CD4-positive, alpha-beta T cell (primary cell): ENCODE measurements at regions of chr11 and their contacts with region 1.

Region 1: DNA sequence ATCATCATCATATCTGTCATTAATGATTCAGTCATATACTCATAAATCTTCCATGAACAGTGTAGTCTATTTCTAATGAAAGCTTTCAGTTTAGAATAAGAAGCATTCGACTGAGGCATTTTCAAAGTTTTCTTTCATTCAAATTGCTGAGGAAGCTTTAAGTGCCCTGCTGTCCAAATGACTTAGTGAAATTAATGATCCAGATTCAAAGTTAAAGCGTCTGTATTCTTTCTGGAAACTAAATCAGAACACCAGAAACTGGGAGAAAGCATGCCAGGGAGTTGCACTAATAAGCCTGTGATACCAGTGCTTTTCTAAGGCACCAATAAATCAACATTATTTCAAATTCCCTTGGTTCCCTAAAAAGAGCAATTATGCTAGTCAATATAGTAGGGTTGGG is 367.8 kb upstream of the ANO5 start:
- DNase-seq: no peak
- ATAC-seq: no peak
- H3K4me3 ChIP-seq: no peak overlapping the region
- H3K4me3 Mint-ChIP-seq: no peak overlapping the region
- H3K27ac ChIP-seq: no peak overlapping the region
- H3K27ac Mint-ChIP-seq: no peak overlapping the region
- H3K4me1 ChIP-seq: no peaks in the 10 kb centered on the region
- H3K4me1 Mint-ChIP-seq: no peaks in the 10 kb centered on the region
- H3K27me3 ChIP-seq: no peaks in the 10 kb centered on the region
- H3K27me3 Mint-ChIP-seq: no peaks in the 10 kb centered on the region
- CTCF ChIP-seq: no peak

Region 2: GRCh38 chr11:21798216-21798615 is 26.9 kb before region 1 on chr11:
- CTCF ChIA-PET with region 1: no interaction called
- POLR2A ChIA-PET with region 1: no interaction called
- intact Hi-C with region 1: no loop called
- DNase-seq: no peak
- ATAC-seq: no peak
- H3K4me3 ChIP-seq: no peak overlapping the region
- H3K4me3 Mint-ChIP-seq: no peak overlapping the region
- H3K27ac ChIP-seq: no peak overlapping the region
- H3K27ac Mint-ChIP-seq: no peak overlapping the region
- H3K4me1 ChIP-seq: no peaks in the 10 kb centered on the region
- H3K4me1 Mint-ChIP-seq: no peaks in the 10 kb centered on the region
- H3K27me3 ChIP-seq: no peaks in the 10 kb centered on the region
- H3K27me3 Mint-ChIP-seq: no peaks in the 10 kb centered on the region
- CTCF ChIP-seq: no peak

Region 3: GRCh38 chr11:21811572-21811971 is 13.6 kb before region 1 on chr11:
- CTCF ChIA-PET with region 1: no interaction called
- POLR2A ChIA-PET with region 1: no interaction called
- intact Hi-C with region 1: no loop called
- DNase-seq: no peak
- ATAC-seq: no peak
- H3K4me3 ChIP-seq: no peak overlapping the region
- H3K4me3 Mint-ChIP-seq: no peak overlapping the region
- H3K27ac ChIP-seq: no peak overlapping the region
- H3K27ac Mint-ChIP-seq: no peak overlapping the region
- H3K4me1 ChIP-seq: no peaks in the 10 kb centered on the region
- H3K4me1 Mint-ChIP-seq: no peaks in the 10 kb centered on the region
- H3K27me3 ChIP-seq: no peaks in the 10 kb centered on the region
- H3K27me3 Mint-ChIP-seq: no peaks in the 10 kb centered on the region
- CTCF ChIP-seq: no peak

Region 4: GRCh38 chr11:21877151-21877550 is 52.0 kb after region 1 on chr11:
- CTCF ChIA-PET with region 1: no interaction called
- POLR2A ChIA-PET with region 1: no interaction called
- intact Hi-C with region 1: no loop called
- DNase-seq: no peak
- ATAC-seq: no peak
- H3K4me3 ChIP-seq: no peak overlapping the region
- H3K4me3 Mint-ChIP-seq: no peak overlapping the region
- H3K27ac ChIP-seq: no peak overlapping the region
- H3K27ac Mint-ChIP-seq: no peak overlapping the region
- H3K4me1 ChIP-seq: no peaks in the 10 kb centered on the region
- H3K4me1 Mint-ChIP-seq: no peaks in the 10 kb centered on the region
- H3K27me3 ChIP-seq: no peaks in the 10 kb centered on the region
- H3K27me3 Mint-ChIP-seq: no peaks in the 10 kb centered on the region
- CTCF ChIP-seq: no peak

Region 5: GRCh38 chr11:23288003-23288783 is 1463.1 kb after region 1 on chr11:
- CTCF ChIA-PET with region 1: no interaction called
- POLR2A ChIA-PET with region 1: no interaction called
- intact Hi-C with region 1: loop called in 1 of 2 experiments (anchors 5 kb)
- DNase-seq: no peak
- ATAC-seq: no peak
- H3K4me3 ChIP-seq: no peak overlapping the region
- H3K4me3 Mint-ChIP-seq: no peak overlapping the region
- H3K27ac ChIP-seq: no peak overlapping the region
- H3K27ac Mint-ChIP-seq: no peak overlapping the region
- H3K4me1 ChIP-seq: no peaks in the 10 kb centered on the region
- H3K4me1 Mint-ChIP-seq: no peaks in the 10 kb centered on the region
- H3K27me3 ChIP-seq: no peaks in the 10 kb centered on the region
- H3K27me3 Mint-ChIP-seq: no peaks in the 10 kb centered on the region
- CTCF ChIP-seq: no peak